PC-3 (cell line): ENCODE measurements at regions of chr2 and their contacts with region 1.

Region 1: DNA sequence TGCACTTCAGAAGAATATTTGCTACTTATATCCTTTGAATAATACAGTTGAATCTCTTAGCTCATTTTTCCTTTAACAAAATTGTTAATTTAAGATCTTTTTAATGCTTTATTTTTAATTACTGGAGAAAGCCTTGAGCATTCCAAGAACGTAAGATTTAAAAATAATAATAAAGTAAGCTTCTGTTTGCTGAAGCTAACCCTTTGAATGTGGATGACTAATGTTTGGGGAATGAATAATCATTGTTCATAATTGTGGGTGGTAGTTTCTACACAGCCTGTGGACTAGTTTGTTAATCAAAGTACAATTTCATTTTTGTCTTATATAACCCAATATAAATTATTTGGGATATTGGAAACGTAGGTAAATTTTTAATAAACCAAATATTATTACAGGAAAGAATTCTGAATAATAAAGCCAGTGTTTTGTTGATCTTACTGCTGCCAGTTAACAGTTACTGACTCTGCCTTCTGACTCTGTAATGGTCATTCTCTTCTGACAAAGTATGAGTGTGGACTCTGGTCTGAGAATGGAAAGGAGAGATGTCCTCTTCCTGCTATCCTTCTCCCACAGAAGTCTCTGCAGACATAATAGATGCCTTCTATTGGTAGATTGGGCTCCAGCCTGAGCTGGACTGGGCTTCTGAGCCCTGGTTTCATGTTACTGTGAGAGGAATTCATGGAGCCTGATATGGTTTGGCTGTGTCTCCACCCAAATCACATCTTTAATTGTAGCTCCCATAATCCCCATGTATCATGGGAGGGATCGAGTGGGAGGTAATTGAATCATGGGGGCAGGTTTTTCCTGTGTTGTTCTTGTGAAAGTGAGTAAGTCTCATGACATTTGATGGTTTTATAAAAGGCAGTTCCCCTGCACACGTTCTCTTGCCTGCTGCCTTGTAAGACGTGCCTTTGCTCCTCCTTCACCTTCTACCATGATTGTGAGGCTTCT is 292.7 kb upstream of the SLC39A10 start:
- DNase-seq: peak; percentile 86
- ATAC-seq: peak; percentile 91
- H3K4me3 ChIP-seq: peak overlapping the region; percentile 36
- H3K27ac ChIP-seq: peak overlapping the region; percentile 86
- H3K4me1 ChIP-seq: peaks cover 25% of the 10 kb centered on the region
- H3K27me3 ChIP-seq: no peaks in the 10 kb centered on the region
- CTCF ChIP-seq: no peak

Region 2: GRCh38 chr2:195021711-195022507 is 342.4 kb before region 1 on chr2:
- CTCF ChIA-PET with region 1: no interaction called
- POLR2A ChIA-PET with region 1: no interaction called
- intact Hi-C with region 1: no loop called
- DNase-seq: no peak
- ATAC-seq: no peak
- H3K4me3 ChIP-seq: no peak overlapping the region
- H3K27ac ChIP-seq: no peak overlapping the region
- H3K4me1 ChIP-seq: 0 out of 2 replicates have a peak, but pooled peaks cover 11% of the 10 kb centered on the region
- H3K27me3 ChIP-seq: no peaks in the 10 kb centered on the region
- CTCF ChIP-seq: no peak

Region 3: GRCh38 chr2:195343942-195344530 is 20.3 kb before region 1 on chr2:
- CTCF ChIA-PET with region 1: no interaction called
- POLR2A ChIA-PET with region 1: no interaction called
- intact Hi-C with region 1: loop called (anchors 1 kb)
- DNase-seq: peak; percentile 41
- ATAC-seq: no peak
- H3K4me3 ChIP-seq: no peak overlapping the region
- H3K27ac ChIP-seq: no peak overlapping the region
- H3K4me1 ChIP-seq: peaks cover 4% of the 10 kb centered on the region; the same call in 1 of the 2 replicates
- H3K27me3 ChIP-seq: no peaks in the 10 kb centered on the region
- CTCF ChIP-seq: no peak

Region 4: DNA sequence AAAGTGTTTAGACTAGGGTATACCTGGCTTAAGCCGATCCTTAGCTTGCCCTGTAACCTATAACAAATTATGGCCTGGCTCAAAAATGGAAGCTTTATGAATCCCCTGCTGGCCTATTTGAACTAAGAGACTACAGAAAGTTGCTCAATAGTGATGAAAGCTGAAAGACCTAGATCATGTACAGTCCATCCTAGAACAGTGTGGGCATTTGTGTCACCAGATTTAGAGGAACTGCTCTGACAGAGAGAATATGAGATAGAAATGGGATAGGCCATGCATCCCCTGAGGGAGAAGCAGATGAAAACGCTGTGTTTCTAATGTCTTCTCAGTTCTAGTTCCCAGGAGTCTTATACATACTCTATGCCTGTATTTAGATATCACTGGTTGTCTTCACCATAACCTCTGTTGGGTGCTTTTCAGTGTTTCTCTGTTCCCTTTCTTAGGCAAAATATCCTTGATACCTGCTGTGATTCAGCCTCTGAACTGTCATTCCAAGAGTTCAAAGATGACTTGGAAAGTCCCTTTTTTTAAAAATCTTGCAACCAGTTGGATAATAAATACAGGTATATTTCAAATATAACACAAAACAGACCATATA is 45.9 kb after region 1 on chr2:
- CTCF ChIA-PET with region 1: no interaction called
- POLR2A ChIA-PET with region 1: no interaction called
- intact Hi-C with region 1: loop called (anchors 5 kb)
- DNase-seq: no peak
- ATAC-seq: no peak
- H3K4me3 ChIP-seq: no peak overlapping the region
- H3K27ac ChIP-seq: no peak overlapping the region
- H3K4me1 ChIP-seq: peaks cover 23% of the 10 kb centered on the region
- H3K27me3 ChIP-seq: no peaks in the 10 kb centered on the region
- CTCF ChIP-seq: no peak

Region 5: GRCh38 chr2:195543902-195544894 is 179.9 kb after region 1 on chr2:
- CTCF ChIA-PET with region 1: no interaction called
- POLR2A ChIA-PET with region 1: no interaction called
- intact Hi-C with region 1: loop called (anchors 1 kb)
- DNase-seq: peak; percentile 91
- ATAC-seq: peak; percentile 100
- H3K4me3 ChIP-seq: peak overlapping the region; percentile 21; the same call in 1 of the 2 replicates
- H3K27ac ChIP-seq: peak overlapping the region; percentile 81
- H3K4me1 ChIP-seq: peaks cover 10% of the 10 kb centered on the region
- H3K27me3 ChIP-seq: no peaks in the 10 kb centered on the region
- CTCF ChIP-seq: no peak